Calu3 (cell line): ENCODE measurements at regions of chr6 and their contacts with region 1.

Region 1: DNA sequence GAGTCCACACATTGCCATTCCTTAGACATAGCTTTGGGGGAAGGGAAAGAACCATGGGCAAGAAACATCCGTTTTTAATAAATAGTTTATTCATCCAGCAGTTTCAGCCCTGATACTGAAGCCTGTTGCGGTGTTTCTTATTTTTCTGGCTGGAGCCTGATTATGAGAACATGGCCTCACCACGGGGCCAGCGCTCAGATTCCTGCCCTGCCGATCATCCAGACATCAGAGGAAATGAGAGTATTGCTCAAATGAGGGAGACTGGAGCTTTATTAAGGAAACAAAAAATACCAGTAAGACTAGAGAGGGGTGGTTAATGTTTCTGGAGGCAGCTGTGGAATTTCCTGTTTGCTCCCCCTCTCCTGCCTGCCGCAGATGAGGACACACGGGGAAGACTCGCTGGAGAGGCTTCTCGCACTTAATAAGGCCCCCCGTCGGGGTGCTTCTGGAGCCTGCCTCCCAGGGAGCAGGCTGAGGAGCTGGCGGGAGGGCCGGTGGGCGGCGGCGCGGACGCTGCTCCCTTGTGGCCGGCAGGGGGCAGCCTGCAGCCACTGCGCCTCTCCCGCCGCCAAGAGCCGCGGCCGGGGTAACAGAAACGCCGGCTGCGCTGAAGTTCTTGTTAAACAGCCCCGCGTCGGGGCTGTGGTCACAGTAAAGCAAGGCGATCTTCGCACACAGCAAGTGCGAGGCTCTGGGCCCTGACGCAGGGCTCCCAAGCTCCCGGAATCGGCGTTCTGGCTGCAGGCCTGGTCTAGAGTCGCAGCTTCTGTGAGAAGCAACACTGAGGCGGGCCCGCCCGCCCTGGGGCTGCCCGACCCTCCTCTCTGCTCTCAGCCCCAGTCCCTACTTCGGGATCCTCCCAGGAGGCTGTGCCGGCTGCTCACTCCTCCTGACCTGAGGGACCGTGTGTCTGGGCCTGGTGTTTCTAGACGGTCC is 17.5 kb downstream of the LEMD2 start:
- DNase-seq: peak; percentile 69
- H3K4me3 Mint-ChIP-seq: no peak overlapping the region
- H3K27ac Mint-ChIP-seq: peak overlapping the region; percentile 23
- H3K4me1 Mint-ChIP-seq: peaks cover 6% of the 10 kb centered on the region
- H3K27me3 Mint-ChIP-seq: peaks cover 24% of the 10 kb centered on the region
- CTCF ChIP-seq: peak; percentile 94

Region 2: GRCh38 chr6:33696548-33697518 is 74.6 kb before region 1 on chr6:
- CTCF ChIA-PET with region 1: no interaction called
- intact Hi-C with region 1: no loop called
- DNase-seq: peak; percentile 53
- H3K4me3 Mint-ChIP-seq: no peak overlapping the region
- H3K27ac Mint-ChIP-seq: peak overlapping the region; percentile 25
- H3K4me1 Mint-ChIP-seq: peaks cover 9% of the 10 kb centered on the region
- H3K27me3 Mint-ChIP-seq: no peaks in the 10 kb centered on the region
- CTCF ChIP-seq: no peak

Region 3: GRCh38 chr6:34027445-34027936 is 256.1 kb after region 1 on chr6:
- CTCF ChIA-PET with region 1: interaction called, 10 read pairs
- intact Hi-C with region 1: loop called (anchors 1 kb)
- DNase-seq: peak; percentile 82
- H3K4me3 Mint-ChIP-seq: no peak overlapping the region
- H3K27ac Mint-ChIP-seq: no peak overlapping the region
- H3K4me1 Mint-ChIP-seq: peaks cover under 1% of the 10 kb centered on the region
- H3K27me3 Mint-ChIP-seq: peaks cover 79% of the 10 kb centered on the region
- CTCF ChIP-seq: peak; percentile 97

Region 4: GRCh38 chr6:34154668-34155447 is 383.4 kb after region 1 on chr6:
- CTCF ChIA-PET with region 1: no interaction called
- intact Hi-C with region 1: loop called (anchors 2 kb)
- DNase-seq: peak; percentile 91
- H3K4me3 Mint-ChIP-seq: peak overlapping the region; percentile 60
- H3K27ac Mint-ChIP-seq: no peak overlapping the region
- H3K4me1 Mint-ChIP-seq: peaks cover 9% of the 10 kb centered on the region
- H3K27me3 Mint-ChIP-seq: peaks cover 94% of the 10 kb centered on the region
- CTCF ChIP-seq: peak; percentile 100

Region 5: GRCh38 chr6:34922177-34922663 is 1150.8 kb after region 1 on chr6:
- CTCF ChIA-PET with region 1: no interaction called
- intact Hi-C with region 1: no loop called
- DNase-seq: no peak
- H3K4me3 Mint-ChIP-seq: no peak overlapping the region
- H3K27ac Mint-ChIP-seq: no peak overlapping the region
- H3K4me1 Mint-ChIP-seq: peaks cover 27% of the 10 kb centered on the region
- H3K27me3 Mint-ChIP-seq: no peaks in the 10 kb centered on the region
- CTCF ChIP-seq: no peak